Gastrocnemius medialis (tissue), 4 donors: ENCODE measurements at regions of chr1 and their contacts with region 1.

Region 1: GRCh38 chr1:234499119-234499942 is 20.4 kb upstream of the TARBP1 start:
- DNase-seq: peak; percentile 82 to 90
- ATAC-seq: peak; percentile 72 to 74
- H3K4me3 ChIP-seq: peak overlapping the region; percentile 38 to 55 (median 46)
- H3K27ac ChIP-seq: peak overlapping the region; percentile 88 to 95 (median 88)
- H3K4me1 ChIP-seq: peaks cover 47 to 51% of the 10 kb centered on the region in 2 donors
- H3K27me3 ChIP-seq: no peaks in the 10 kb centered on the region
- CTCF ChIP-seq: peak; percentile 96 to 99 (median 98)
- POLR2A ChIP-seq: peak in 1 of 2 donors; percentile 8

Region 2: DNA sequence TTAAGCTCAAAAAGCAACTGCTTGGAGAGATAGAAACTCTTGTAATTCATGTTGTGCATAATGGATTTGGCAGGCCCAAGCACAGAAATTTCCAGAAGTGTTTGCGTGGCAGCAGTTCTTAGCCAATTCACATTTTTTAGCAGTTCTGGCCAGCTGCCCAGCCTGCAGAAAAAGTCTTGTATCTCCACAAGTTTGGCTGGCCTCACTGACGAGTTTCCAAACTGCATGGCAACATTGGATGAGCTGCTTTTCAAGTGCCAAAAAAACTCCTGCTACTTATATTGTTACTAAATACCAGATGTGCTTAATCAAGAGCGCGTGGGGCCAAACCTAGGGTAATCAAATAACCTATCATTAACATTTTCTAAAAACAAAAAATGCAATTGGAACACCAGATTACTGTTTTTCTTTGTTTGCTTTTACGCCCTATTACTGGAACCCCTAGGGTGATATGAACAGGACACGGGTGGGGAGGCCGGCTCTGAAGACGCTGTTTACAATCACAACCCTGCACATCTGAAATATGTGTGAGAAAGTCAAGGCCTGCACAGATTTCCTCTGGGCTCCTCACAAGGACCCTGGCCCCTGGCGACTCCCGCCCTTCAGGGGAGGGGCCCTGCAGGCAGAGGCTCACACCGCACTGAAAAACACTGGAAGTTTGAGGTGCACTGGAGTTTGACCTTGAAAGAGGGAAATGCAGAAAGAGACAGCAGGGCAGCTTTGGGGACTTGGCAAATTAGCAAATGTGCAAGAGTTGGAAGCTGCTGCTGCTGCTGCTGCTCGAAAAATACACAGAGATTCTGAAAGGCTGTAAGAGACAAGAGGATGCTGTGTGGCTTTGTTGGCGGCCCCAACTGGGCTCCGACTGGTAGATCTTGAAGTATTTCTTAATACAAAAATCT is 34.9 kb after region 1 on chr1:
- in situ Hi-C with region 1: no loop called
- intact Hi-C with region 1: loop called (anchors 1 kb)
- DNase-seq: peak; percentile 79 to 89
- ATAC-seq: no peak
- H3K4me3 ChIP-seq: no peak overlapping the region
- H3K27ac ChIP-seq: peak overlapping the region; percentile 93 to 100 (median 98)
- H3K4me1 ChIP-seq: peaks cover 98% of the 10 kb centered on the region in 2 donors
- H3K27me3 ChIP-seq: no peaks in the 10 kb centered on the region
- CTCF ChIP-seq: no peak
- POLR2A ChIP-seq: no peak

Region 3: GRCh38 chr1:234610348-234611152 is 111.2 kb after region 1 on chr1:
- in situ Hi-C with region 1: loop called in 1 of 4 experiments (anchors 10 kb)
- intact Hi-C with region 1: loop called (anchors 2 kb)
- DNase-seq: peak; percentile 90 to 96
- ATAC-seq: peak; percentile 32 to 37
- H3K4me3 ChIP-seq: peak overlapping the region; percentile 67 to 78 (median 72)
- H3K27ac ChIP-seq: peak overlapping the region; percentile 98 to 99 (median 98)
- H3K4me1 ChIP-seq: peaks cover 30 to 52% of the 10 kb centered on the region in 2 donors
- H3K27me3 ChIP-seq: no peaks in the 10 kb centered on the region
- CTCF ChIP-seq: peak in 2 of 5 experiments; percentile 25 to 35
- POLR2A ChIP-seq: peak in 1 of 2 donors; percentile 99

Region 4: GRCh38 chr1:234730770-234731568 is 231.6 kb after region 1 on chr1:
- in situ Hi-C with region 1: loop called in 3 of 4 experiments (anchors 5 to 25 kb)
- intact Hi-C with region 1: loop called (anchors 1 kb)
- DNase-seq: no peak
- ATAC-seq: no peak
- H3K4me3 ChIP-seq: no peak overlapping the region
- H3K27ac ChIP-seq: no peak overlapping the region
- H3K4me1 ChIP-seq: peaks cover 27 to 37% of the 10 kb centered on the region in 2 donors
- H3K27me3 ChIP-seq: no peaks in the 10 kb centered on the region
- CTCF ChIP-seq: no peak
- POLR2A ChIP-seq: no peak

Region 5: DNA sequence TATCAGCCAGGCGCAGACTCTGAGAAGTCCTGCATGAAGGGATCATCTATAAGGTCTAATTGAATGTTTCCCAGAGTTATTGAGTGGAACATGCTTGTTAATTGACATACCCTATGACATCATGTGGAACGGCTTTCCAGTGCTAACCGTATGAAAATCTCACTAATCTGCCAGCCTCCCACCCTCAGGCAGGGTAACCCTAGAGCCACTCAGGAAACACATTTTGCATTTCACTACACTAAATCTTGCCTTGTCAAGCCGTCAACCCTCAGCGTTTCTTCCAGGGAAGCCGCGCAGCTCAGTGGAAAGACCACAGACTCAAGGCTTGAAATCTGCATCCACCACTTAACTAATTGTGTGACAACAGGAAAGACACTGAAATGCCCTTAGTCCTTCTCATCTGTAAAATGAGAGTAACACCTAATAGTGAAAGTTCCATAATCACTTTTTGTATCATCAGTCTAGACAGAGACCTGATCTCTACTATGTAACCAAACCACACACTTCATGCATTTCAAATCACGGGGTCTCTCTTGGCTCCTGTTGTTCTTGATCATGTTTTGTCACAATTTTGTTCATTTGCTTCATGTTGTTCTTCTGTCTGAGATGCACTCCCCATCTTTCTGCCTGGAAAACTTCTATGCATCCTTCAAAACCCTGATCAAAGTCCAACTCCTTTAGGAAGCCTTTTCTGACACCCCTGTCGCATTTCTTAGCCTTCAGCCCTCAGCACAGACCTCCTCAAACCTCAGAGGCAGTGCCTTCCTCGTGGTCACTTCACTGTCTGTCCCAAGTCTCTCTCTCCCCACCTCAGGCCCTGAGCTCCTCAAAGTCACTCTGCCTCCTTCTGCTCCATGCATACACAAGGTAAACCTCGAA is 382.8 kb after region 1 on chr1:
- in situ Hi-C with region 1: loop called in 1 of 4 experiments (anchors 25 kb)
- intact Hi-C with region 1: loop called (anchors 1 kb)
- DNase-seq: no peak
- ATAC-seq: no peak
- H3K4me3 ChIP-seq: no peak overlapping the region
- H3K27ac ChIP-seq: peak overlapping the region in 1 of 4 donors; percentile 83
- H3K4me1 ChIP-seq: peaks cover 37 to 44% of the 10 kb centered on the region in 2 donors
- H3K27me3 ChIP-seq: no peaks in the 10 kb centered on the region
- CTCF ChIP-seq: no peak
- POLR2A ChIP-seq: no peak

Region 6: DNA sequence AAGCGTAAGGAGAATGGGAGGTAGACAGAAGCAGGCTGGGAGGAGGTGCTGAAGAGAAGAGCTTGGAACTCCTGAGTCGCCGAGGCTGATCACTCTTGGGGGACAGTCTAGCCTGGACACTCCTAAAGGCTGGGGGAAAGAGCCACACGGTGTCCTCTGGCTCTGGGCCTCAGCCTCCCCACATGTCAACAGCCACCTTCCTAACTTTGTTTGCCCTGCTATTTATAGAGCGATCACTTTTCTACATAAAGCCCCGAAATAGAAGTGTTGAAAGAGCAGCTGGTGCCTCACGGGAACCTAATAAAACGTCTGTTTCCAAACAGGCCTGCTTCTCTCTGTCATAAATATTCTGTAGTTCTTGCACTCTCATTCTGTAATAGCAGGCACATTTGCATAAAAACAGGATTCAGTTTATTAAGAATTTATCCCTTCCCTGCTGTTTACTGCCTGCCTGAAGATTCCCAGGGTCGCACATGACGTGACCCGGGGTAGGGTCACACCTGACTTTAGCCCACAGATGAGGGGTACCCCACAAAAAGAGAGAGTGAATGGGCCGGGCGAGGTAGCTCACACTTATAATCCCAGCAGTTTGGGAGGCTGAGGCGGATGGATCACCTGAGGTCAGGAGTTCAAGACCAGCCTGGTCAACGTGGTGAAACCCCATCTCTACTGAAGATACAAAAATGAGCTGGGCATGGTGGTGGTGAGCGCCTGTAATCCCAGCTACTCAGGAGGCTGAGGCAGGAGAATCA is 416.8 kb after region 1 on chr1:
- in situ Hi-C with region 1: no loop called
- intact Hi-C with region 1: no loop called
- DNase-seq: peak; percentile 88 to 92
- ATAC-seq: peak; percentile 90 to 93
- H3K4me3 ChIP-seq: no peak overlapping the region
- H3K27ac ChIP-seq: peak overlapping the region; percentile 85 to 94 (median 91)
- H3K4me1 ChIP-seq: peaks cover 74 to 76% of the 10 kb centered on the region in 2 donors
- H3K27me3 ChIP-seq: no peaks in the 10 kb centered on the region
- CTCF ChIP-seq: no peak
- POLR2A ChIP-seq: peak; percentile 55 to 71

Region 7: DNA sequence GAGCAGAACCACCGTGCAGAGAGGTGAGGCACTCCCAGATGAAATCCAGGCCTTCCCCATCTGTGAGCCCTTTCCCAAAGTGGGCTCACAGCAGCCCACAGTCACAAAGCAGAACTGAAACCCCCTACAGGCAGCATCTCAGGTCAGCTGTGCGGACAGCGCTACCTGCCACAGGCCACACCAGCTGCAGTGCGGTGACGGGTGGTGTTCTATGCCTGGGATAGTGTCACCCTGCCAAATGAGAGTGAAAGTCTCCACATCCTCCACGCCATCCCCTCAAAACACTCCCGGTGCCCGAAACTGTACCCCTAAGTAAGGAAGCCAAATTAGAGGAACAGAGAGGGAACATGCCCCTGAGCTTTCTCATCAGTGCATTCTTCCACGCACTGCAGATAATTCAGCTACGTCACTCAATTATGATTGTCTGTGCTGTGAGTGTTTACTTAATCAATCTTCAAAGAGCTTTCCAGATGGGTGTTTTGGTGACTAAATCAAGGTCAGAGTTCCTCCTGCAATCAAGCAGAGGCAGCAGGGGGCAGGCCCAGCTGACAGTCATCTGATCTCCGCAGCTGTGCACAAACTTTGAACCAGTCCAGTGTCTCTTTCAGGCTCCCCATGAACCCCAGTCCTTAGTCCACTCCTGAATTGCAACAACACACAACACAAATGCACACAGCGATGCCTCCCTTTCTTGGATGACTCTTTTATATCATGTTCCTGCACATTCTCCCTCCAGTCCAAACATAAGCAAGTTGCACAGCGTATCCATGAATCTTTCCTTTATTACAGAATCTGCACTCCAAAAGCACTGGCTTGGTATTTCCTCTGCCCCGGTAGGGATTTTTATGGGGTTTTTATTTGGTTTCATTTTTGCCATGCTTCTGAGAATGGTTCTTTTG is 479.3 kb after region 1 on chr1:
- in situ Hi-C with region 1: loop called in 1 of 4 experiments (anchors 10 kb)
- intact Hi-C with region 1: loop called (anchors 5 kb)
- DNase-seq: peak; percentile 58 to 68
- ATAC-seq: peak in 1 of 2 donors; percentile 16
- H3K4me3 ChIP-seq: no peak overlapping the region
- H3K27ac ChIP-seq: peak overlapping the region; percentile 83 to 91 (median 89)
- H3K4me1 ChIP-seq: peaks cover 46 to 68% of the 10 kb centered on the region in 2 donors
- H3K27me3 ChIP-seq: no peaks in the 10 kb centered on the region
- CTCF ChIP-seq: no peak
- POLR2A ChIP-seq: peak; percentile 7 to 23

Region 8: DNA sequence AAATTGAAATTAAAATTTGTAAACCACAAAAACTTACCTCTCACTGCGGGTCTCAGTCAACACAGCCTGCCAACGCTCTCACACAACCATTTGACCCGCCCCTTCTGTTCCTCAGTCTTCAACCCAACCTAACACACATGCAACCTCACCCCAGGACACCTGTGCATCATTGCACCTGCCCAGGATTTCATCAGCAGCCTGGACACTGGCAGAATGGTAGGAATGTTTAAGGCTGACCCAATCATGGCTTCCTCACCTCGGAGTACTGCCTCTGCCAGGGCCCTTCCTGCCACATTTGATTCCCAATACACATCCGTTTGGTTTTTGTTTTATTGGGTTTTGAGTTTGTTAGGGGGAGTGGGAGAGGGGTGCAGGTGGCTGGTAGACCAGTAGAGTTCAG is 588.6 kb after region 1 on chr1:
- in situ Hi-C with region 1: loop called (anchors 5 kb)
- intact Hi-C with region 1: loop called (anchors 1 kb)
- DNase-seq: peak in 1 of 2 donors; percentile 11
- ATAC-seq: no peak
- H3K4me3 ChIP-seq: no peak overlapping the region
- H3K27ac ChIP-seq: no peak overlapping the region
- H3K4me1 ChIP-seq: peaks cover 11 to 14% of the 10 kb centered on the region in 2 donors
- H3K27me3 ChIP-seq: no peaks in the 10 kb centered on the region
- CTCF ChIP-seq: no peak
- POLR2A ChIP-seq: no peak